Calu3 (cell line): ENCODE measurements at regions of chr7 and their contacts with region 1.

Region 1: DNA sequence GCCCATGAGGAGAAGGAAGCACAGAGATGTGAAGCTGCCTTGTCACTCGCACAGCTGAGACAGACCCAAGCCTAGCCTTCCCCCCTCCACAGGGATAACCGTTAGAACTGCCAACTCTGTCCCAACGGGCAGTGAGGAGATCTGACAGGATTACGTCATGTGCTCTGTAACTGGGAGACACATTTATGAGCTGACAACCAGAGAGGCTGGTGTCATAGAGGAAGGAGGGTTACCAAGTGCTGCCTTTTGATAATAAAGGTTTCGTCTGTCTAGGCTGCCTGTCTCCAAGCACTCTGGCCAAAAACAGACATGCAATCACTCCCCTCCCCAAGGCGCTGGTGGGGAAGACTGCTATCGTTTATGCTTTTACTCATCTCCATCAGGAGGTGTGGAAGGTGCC is 165.9 kb downstream of the PLXNA4 start:
- DNase-seq: no peak
- H3K4me3 Mint-ChIP-seq: no peak overlapping the region
- H3K27ac Mint-ChIP-seq: no peak overlapping the region
- H3K4me1 Mint-ChIP-seq: no peaks in the 10 kb centered on the region
- H3K27me3 Mint-ChIP-seq: peaks cover 58% of the 10 kb centered on the region
- CTCF ChIP-seq: no peak

Region 2: GRCh38 chr7:132488634-132489302 is 78.4 kb after region 1 on chr7:
- CTCF ChIA-PET with region 1: interaction called, 10 read pairs
- intact Hi-C with region 1: no loop called
- DNase-seq: no peak
- H3K4me3 Mint-ChIP-seq: no peak overlapping the region
- H3K27ac Mint-ChIP-seq: no peak overlapping the region
- H3K4me1 Mint-ChIP-seq: no peaks in the 10 kb centered on the region
- H3K27me3 Mint-ChIP-seq: peaks cover 79% of the 10 kb centered on the region
- CTCF ChIP-seq: no peak